ENCODE measurements at regions of chr12 and their contacts with region 1.

Region 1: GRCh38 chr12:92614502-92614901 is 88.3 kb upstream of the PLEKHG7 start:
- DNase-seq: no peak
- ATAC-seq: no peak
- H3K4me3 ChIP-seq: no peak overlapping the region
- H3K27ac ChIP-seq: peak overlapping the region in 1 of 2 experiments; percentile 17; a peak in 2 of 6 replicates
- H3K4me1 ChIP-seq: peaks cover 6% of the 10 kb centered on the region
- CTCF ChIP-seq: no peak
- EP300 ChIP-seq: no peak
- POLR2A ChIP-seq: no peak
- RAD21 ChIP-seq: no peak

Region 2: DNA sequence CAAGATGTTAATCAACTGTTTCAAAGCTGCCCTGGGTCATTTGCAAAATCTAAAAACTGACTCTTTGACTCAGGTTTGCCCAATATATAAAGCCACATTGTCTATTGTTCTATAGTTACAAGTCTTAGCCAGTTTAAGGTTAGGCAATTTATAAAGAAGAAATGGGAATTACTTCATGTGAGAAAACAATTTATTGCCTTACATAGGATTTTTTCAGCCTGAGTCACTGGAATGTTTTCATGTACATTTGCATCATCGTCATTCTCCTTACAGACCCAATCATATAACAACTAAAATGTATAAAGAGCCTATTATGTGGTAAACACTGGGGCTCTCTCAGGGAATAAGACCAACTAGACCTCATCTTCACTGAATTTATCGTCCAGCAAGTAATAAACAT is 12.0 kb before region 1 on chr12:
- CTCF ChIA-PET with region 1: interaction called, 15 read pairs
- POLR2A ChIA-PET with region 1: no interaction called
- DNase-seq: peak in 1 of 2 experiments; percentile 82
- ATAC-seq: peak; percentile 19 to 47; a peak in 4 of 6 replicates
- H3K4me3 ChIP-seq: no peak overlapping the region
- H3K27ac ChIP-seq: peak overlapping the region; percentile 90 to 98
- H3K4me1 ChIP-seq: peaks cover 37% of the 10 kb centered on the region
- CTCF ChIP-seq: no peak
- EP300 ChIP-seq: peak in 1 of 2 experiments; percentile 37; a peak in 1 of 5 replicates
- POLR2A ChIP-seq: no peak
- RAD21 ChIP-seq: no peak; a peak in 1 of 5 replicates

Region 3: DNA sequence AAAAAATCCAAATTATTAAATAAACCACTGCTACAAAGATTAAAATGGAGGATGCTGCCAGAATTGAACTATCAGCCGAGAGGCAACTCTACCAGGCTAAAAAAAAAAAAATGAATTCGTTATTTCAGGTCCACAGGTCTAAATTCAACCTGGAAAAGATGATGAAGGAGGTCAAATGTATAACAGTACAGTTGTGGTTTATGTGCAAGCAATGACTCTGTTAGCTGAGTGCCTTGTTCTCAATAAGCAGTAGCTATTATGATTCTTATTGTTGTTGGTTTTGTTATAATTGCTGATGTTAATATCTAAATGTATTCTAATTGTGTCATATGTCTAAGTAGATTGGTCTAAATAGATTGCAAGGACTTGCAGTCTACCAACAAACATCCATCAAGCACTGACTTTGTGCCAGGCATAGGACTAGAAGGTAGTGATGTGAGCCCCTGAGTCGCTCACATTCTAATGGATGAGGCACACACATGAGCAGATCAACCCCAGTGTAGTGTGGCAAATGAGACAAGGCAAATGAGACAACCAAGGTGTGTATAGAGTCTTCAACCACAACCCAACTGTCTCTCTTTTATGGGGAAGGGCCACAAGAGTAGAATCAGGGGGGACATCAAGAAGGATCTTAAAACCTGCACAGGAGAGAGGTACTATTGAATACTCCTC is 11.3 kb after region 1 on chr12:
- CTCF ChIA-PET with region 1: no interaction called
- POLR2A ChIA-PET with region 1: no interaction called
- DNase-seq: no peak
- ATAC-seq: no peak
- H3K4me3 ChIP-seq: no peak overlapping the region
- H3K27ac ChIP-seq: 0 out of 6 replicates have a peak overlapping the region, but pooled peaks of 1 of the 2 experiments have one; percentile 16
- H3K4me1 ChIP-seq: peaks cover 21% of the 10 kb centered on the region
- CTCF ChIP-seq: no peak
- EP300 ChIP-seq: no peak
- POLR2A ChIP-seq: no peak
- RAD21 ChIP-seq: no peak